Gastrocnemius medialis (tissue), 4 donors: ENCODE measurements at regions of chr21 and their contacts with region 1.

Region 1: DNA sequence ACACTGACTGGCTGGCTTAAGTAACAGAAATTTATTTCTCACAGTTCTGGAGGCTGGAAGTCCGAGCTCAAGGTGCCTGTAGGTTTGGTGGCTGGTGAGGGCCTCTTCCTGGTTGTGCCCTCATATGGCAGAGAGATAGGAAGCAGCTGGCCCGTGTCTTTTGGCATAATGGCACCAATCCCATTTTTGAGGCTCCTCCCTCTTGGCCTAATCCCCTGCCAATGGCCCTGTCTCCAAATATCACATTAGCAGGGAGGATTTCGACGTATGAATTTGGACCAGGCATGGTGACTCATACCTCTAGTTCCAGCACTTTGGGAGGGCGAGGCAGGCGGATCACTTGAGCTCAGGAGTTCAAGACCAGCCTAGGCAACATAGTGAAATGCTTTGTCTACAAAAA is 37.4 kb downstream of the AGPAT3 start:
- DNase-seq: peak in 1 of 2 donors; percentile 52
- ATAC-seq: peak in 1 of 2 donors; percentile 20
- H3K4me3 ChIP-seq: no peak overlapping the region
- H3K27ac ChIP-seq: peak overlapping the region; percentile 79 to 90 (median 84)
- H3K4me1 ChIP-seq: peaks cover 27 to 33% of the 10 kb centered on the region in 2 donors
- H3K27me3 ChIP-seq: no peaks in the 10 kb centered on the region
- CTCF ChIP-seq: no peak
- POLR2A ChIP-seq: no peak

Region 2: GRCh38 chr21:43740497-43741156 is 161.8 kb before region 1 on chr21:
- in situ Hi-C with region 1: no loop called
- intact Hi-C with region 1: no loop called
- DNase-seq: peak in 1 of 2 donors; percentile 39
- ATAC-seq: peak in 1 of 2 donors; percentile 71
- H3K4me3 ChIP-seq: no peak overlapping the region
- H3K27ac ChIP-seq: peak overlapping the region in 1 of 4 donors; percentile 54
- H3K4me1 ChIP-seq: no peaks in the 10 kb centered on the region
- H3K27me3 ChIP-seq: no peaks in the 10 kb centered on the region
- CTCF ChIP-seq: no peak
- POLR2A ChIP-seq: no peak

Region 3: DNA sequence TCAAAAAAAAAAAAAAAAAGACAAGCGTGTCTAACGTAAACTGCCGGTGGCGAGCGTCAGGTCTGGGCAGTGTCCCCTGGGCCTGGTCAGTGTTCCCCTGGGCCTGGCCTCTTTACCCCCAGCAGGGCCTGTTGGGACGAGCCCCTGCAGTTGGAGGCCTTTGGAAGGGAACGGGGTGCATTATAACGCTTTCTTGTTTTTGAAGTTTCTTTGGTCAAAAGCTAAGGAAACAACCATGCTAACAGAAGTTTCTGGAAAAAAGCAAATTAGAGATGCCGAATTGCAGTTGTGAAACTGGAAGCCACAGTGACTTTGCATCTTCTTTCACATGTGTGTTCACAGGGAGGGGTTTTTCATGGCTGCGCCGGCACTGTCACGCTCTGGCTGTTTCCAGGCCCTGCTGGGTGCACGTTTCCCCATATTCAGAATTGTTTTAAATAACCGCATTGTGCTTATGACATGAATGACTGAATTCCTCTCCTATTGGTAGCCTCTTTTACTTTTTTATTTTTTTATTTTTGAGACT is 97.1 kb before region 1 on chr21:
- in situ Hi-C with region 1: loop called in 1 of 4 experiments (anchors 10 kb)
- intact Hi-C with region 1: no loop called
- DNase-seq: no peak
- ATAC-seq: no peak
- H3K4me3 ChIP-seq: no peak overlapping the region
- H3K27ac ChIP-seq: no peak overlapping the region
- H3K4me1 ChIP-seq: no peaks in the 10 kb centered on the region
- H3K27me3 ChIP-seq: no peaks in the 10 kb centered on the region
- CTCF ChIP-seq: no peak
- POLR2A ChIP-seq: no peak

Region 4: GRCh38 chr21:43929217-43930025 is 27.0 kb after region 1 on chr21:
- in situ Hi-C with region 1: no loop called
- intact Hi-C with region 1: loop called (anchors 2 kb)
- DNase-seq: peak; percentile 91 to 96
- ATAC-seq: peak; percentile 67 to 69
- H3K4me3 ChIP-seq: peak overlapping the region in 3 of 4 donors; percentile 25 to 29 (median 29)
- H3K27ac ChIP-seq: peak overlapping the region; percentile 94 to 98 (median 96)
- H3K4me1 ChIP-seq: peaks cover 50 to 81% of the 10 kb centered on the region in 2 donors
- H3K27me3 ChIP-seq: no peaks in the 10 kb centered on the region
- CTCF ChIP-seq: peak; percentile 41 to 58 (median 48)
- POLR2A ChIP-seq: peak; percentile 37 to 51